ENCODE measurements at regions of chrX and their contacts with region 1.

Region 1: GRCh38 chrX:46912098-46912602 is at the start of gene JADE3:
- DNase-seq: peak; percentile 76
- ATAC-seq: peak; percentile 91
- H3K4me3 ChIP-seq: peak within 1 kb of the TSS; percentile 88
- H3K27ac ChIP-seq: no peak within 1 kb of the TSS
- H3K4me1 ChIP-seq: peaks cover 9% of the 10 kb centered on the region
- H3K27me3 ChIP-seq: no peaks in the 10 kb centered on the region
- CTCF ChIP-seq: 0 out of 2 replicates have a peak, but pooled peaks have one; percentile 14
- total RNA-seq, gene JADE3: 7.1 and 7.3 TPM in 2 replicates

Region 2: GRCh38 chrX:46882266-46882665 is 29.9 kb before region 1 on chrX:
- CTCF ChIA-PET with region 1: no interaction called
- POLR2A ChIA-PET with region 1: no interaction called
- intact Hi-C with region 1: no loop called
- DNase-seq: no peak
- ATAC-seq: no peak
- H3K4me3 ChIP-seq: no peak overlapping the region
- H3K27ac ChIP-seq: no peak overlapping the region
- H3K4me1 ChIP-seq: no peaks in the 10 kb centered on the region
- H3K27me3 ChIP-seq: no peaks in the 10 kb centered on the region
- CTCF ChIP-seq: no peak

Region 3: GRCh38 chrX:46978341-46979291 is 66.5 kb after region 1 on chrX:
- CTCF ChIA-PET with region 1: no interaction called
- POLR2A ChIA-PET with region 1: no interaction called
- intact Hi-C with region 1: loop called (anchors 2 kb)
- DNase-seq: peak; percentile 84
- ATAC-seq: peak; percentile 81
- H3K4me3 ChIP-seq: no peak overlapping the region; the same call in 1 of the 2 replicates
- H3K27ac ChIP-seq: peak overlapping the region; percentile 76
- H3K4me1 ChIP-seq: peaks cover 20% of the 10 kb centered on the region
- H3K27me3 ChIP-seq: no peaks in the 10 kb centered on the region
- CTCF ChIP-seq: peak; percentile 88

Measured in PC-3 (cell line).